ENCODE measurements at regions of chr10 and their contacts with region 1.

Region 1: GRCh38 chr10:11986593-11987216 is 55.9 kb downstream of the UPF2 start:
- DNase-seq: peak; percentile 83
- ATAC-seq: peak; percentile 69 to 79

Region 2: GRCh38 chr10:11782793-11783557 is 203.7 kb before region 1 on chr10:
- intact Hi-C with region 1: loop called in 1 of 2 experiments (anchors 5 kb)
- DNase-seq: no peak
- ATAC-seq: peak in 1 of 2 donors; percentile 38

Region 3: DNA sequence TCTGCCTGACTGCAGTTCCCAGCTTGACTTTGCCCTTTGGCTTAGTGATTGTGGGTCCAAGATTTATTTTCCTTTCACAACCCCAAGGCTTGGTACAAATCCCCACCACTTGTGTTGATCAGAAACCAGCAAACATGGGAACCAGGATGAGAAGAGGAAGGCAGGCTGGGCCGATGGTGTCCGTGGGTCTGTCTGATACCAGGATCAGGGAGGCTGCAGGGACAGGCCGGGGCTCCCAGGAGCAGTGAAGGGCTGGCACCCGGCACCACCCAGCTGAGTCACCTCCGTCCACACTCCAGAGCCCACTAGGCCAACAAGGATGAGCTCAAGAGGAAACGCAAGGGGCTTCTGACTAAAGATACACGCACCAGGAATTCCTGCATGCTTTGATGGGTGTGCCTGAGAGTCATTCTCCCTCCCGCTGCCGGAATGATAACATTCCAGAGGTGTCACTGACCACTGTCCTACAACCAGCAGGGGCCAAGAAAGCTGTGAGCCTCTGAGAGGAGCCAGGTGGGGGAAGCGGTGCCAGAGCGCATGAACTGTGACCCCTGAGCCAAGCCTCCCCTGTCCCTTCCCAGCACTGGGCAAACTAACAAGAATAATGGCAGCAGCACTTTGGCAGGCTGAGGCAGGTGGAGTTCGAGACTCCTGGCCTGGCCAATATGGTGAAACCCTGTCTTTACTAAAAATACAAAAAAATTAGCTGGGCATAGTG is 192.8 kb before region 1 on chr10:
- intact Hi-C with region 1: loop called in 1 of 2 experiments (anchors 2 kb)
- DNase-seq: no peak
- ATAC-seq: peak; percentile 41 to 82

Measured in left cardiac atrium (tissue), 4 donors.